ENCODE measurements at regions of chr12 and their contacts with region 1.

Region 1: GRCh38 chr12:100554608-100555077 is 18.8 kb upstream of the GAS2L3 start:
- DNase-seq: no peak
- H3K4me3 Mint-ChIP-seq: no peak overlapping the region
- H3K27ac Mint-ChIP-seq: no peak overlapping the region
- H3K4me1 Mint-ChIP-seq: no peaks in the 10 kb centered on the region
- H3K27me3 Mint-ChIP-seq: peaks cover 6% of the 10 kb centered on the region

Region 2: DNA sequence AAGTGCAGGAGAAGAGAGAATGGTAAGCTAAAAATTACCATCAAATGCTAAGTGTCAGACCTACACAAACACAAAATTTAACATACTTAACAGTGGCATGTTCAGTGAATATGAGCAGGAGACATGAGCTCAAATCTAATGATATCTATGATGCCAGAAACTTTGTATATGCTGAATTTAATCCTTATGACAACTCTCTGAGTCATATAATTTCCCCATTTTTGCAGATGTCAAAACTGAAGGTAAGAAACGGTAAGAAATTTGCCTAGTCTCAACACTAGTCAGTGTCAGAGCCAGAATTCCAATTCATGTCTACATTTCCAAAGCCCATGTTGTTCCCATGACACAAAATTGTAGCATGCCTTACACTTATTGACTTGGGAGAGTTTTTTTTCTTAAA is 1533.8 kb before region 1 on chr12:
- CTCF ChIA-PET with region 1: no interaction called
- intact Hi-C with region 1: no loop called
- DNase-seq: no peak
- H3K4me3 Mint-ChIP-seq: no peak overlapping the region
- H3K27ac Mint-ChIP-seq: no peak overlapping the region
- H3K4me1 Mint-ChIP-seq: no peaks in the 10 kb centered on the region
- H3K27me3 Mint-ChIP-seq: peaks cover 4% of the 10 kb centered on the region

Region 3: DNA sequence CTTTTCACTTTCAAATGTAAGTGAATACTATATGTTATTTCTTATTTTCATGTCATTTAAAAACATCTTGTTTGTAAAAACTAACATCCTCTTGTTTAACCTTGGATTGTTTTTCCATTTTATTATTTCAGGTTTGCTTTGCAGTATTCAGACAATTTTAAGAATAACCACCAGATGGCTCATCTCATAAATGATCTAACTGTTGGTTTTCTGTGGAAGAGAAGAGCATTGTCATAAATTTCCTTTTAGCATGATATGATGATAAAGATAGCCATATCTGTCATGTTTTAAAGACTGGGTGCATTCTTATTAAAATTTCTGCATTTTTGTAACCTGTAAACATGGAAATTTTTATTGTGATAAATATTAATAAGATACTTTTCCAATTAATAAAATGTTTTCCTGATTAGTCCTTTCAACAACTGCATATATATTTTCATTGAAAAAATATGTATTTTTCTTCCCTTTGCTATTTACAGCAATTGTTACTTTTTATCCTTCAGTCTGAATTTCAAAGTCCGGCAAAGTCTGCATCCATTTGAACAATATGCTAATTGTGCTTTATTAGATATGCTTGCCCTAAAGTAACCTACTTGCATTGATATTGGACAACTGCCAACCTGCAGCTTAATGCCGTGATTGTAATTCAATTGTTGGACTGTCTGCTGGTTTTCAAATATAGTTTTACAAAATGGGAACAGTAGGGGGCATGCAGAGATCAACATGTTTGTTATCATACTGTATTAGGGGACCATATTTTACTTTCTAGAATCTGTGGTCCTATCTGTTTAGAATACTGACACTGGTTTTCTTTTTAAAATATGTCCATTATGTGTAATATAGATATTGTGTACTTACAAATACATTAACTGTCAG is 743.7 kb before region 1 on chr12:
- CTCF ChIA-PET with region 1: no interaction called
- intact Hi-C with region 1: loop called (anchors 2 kb)
- DNase-seq: no peak
- H3K4me3 Mint-ChIP-seq: no peak overlapping the region
- H3K27ac Mint-ChIP-seq: no peak overlapping the region
- H3K4me1 Mint-ChIP-seq: no peaks in the 10 kb centered on the region
- H3K27me3 Mint-ChIP-seq: no peaks in the 10 kb centered on the region

Region 4: GRCh38 chr12:100348657-100349454 is 205.8 kb before region 1 on chr12:
- CTCF ChIA-PET with region 1: interaction called, 9 read pairs
- intact Hi-C with region 1: loop called (anchors 1 kb)
- DNase-seq: no peak
- H3K4me3 Mint-ChIP-seq: no peak overlapping the region
- H3K27ac Mint-ChIP-seq: no peak overlapping the region
- H3K4me1 Mint-ChIP-seq: no peaks in the 10 kb centered on the region
- H3K27me3 Mint-ChIP-seq: no peaks in the 10 kb centered on the region

Region 5: DNA sequence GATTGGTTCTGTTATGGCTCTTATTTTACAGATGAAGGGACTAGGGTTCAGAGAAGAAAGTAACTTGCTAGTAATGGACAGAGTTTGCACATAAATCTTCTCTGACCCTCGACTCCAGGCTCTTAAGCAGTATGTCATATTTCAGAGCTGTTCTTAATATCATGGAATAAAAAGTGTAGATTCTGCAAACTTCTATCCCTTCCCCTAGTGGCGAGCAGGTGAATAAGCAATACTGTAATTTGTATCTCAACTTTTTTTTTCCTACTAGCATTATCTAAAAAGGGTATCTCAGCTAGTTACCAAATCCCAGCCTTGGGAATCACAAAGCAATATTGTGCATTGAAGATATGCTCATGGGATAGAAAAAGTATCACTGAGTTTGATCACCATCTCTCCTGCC is 323.1 kb after region 1 on chr12:
- CTCF ChIA-PET with region 1: no interaction called
- intact Hi-C with region 1: no loop called
- DNase-seq: no peak
- H3K4me3 Mint-ChIP-seq: no peak overlapping the region
- H3K27ac Mint-ChIP-seq: no peak overlapping the region
- H3K4me1 Mint-ChIP-seq: no peaks in the 10 kb centered on the region
- H3K27me3 Mint-ChIP-seq: peaks cover 4% of the 10 kb centered on the region

Measured in activated naive CD4-positive, alpha-beta T cell treated with anti-CD3 and anti-CD28 coated beads for 36 hours (primary cell).